Naive thymus-derived CD4-positive, alpha-beta T cell (primary cell): ENCODE measurements at regions of chr9 and their contacts with region 1.

Region 1: DNA sequence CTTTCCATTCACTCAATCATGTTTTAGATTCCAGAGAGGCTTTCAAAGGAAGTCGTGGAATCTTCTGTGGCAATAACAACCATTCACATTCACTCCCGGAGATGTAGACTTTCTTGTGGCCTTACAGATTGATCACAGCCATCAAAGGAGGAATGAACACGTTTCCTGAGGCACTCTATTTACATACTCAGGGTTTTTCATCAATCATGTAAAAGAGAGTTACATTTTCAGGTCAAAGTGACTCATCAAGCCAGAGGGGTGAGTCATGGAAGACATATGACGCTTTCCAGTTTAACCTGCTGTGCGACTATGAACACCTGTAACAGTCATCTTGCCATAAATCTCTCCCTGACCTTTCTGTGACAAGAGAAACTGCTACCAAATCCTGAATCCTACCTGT is 39.3 kb upstream of the RAD23B start:
- DNase-seq: peak in 2 of 9 donors; percentile 8 to 28
- ATAC-seq: no peak
- H3K4me3 ChIP-seq: no peak overlapping the region
- H3K4me3 Mint-ChIP-seq: no peak overlapping the region
- H3K27ac ChIP-seq: no peak overlapping the region
- H3K27ac Mint-ChIP-seq: peak overlapping the region in 2 of 9 donors; percentile 2 to 43
- H3K4me1 ChIP-seq: no peaks in the 10 kb centered on the region
- H3K4me1 Mint-ChIP-seq: peaks cover 5 to 20% (median 12%) of the 10 kb centered on the region in 7 donors
- H3K27me3 ChIP-seq: no peaks in the 10 kb centered on the region
- H3K27me3 Mint-ChIP-seq: peaks cover 0 to 1% (median 0%) of the 10 kb centered on the region in 5 donors

Region 2: DNA sequence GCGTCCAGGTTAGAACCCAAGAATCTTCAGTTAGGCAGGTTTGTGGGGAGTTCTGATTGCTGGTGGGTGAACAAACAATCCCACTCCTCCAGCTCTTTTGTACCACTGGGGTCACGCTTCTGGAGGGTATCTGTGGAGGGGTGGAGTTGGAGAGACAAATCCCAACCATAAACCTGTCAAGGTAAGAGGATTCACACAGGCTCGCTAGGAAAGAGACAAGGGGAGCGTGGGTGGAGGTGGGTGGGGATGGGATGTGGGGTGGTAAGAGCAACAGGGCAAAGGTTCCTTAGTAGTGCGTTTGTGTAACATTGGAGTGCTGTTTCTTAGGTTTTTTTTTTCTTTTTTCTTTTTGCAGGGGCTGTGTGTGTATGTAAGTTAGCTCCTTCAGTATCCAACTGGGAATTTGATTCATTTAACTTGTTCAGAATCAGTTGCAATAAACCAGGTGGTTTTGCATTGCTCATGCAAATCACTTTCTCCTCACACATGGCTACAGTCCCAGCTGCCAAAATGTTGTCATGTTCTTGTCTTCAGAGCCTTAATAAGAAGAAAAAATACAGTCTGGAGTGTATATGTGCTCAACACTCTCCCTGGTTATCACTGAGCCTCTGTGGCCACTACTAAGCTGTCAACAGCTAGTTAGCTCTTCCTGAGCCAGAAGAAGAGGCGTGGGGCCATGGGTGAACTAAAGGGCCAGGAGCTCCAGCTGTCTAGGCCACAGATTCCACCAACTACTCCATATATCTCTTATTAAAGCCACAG is 124.7 kb before region 1 on chr9:
- CTCF ChIA-PET with region 1: no interaction called
- POLR2A ChIA-PET with region 1: no interaction called
- intact Hi-C with region 1: no loop called
- DNase-seq: no peak
- ATAC-seq: no peak
- H3K4me3 ChIP-seq: no peak overlapping the region
- H3K4me3 Mint-ChIP-seq: no peak overlapping the region
- H3K27ac ChIP-seq: no peak overlapping the region
- H3K27ac Mint-ChIP-seq: no peak overlapping the region
- H3K4me1 ChIP-seq: no peaks in the 10 kb centered on the region
- H3K4me1 Mint-ChIP-seq: peaks cover 0 to 6% (median 0%) of the 10 kb centered on the region in 7 donors
- H3K27me3 ChIP-seq: no peaks in the 10 kb centered on the region
- H3K27me3 Mint-ChIP-seq: peaks cover 4 to 32% (median 13%) of the 10 kb centered on the region in 5 donors

Region 3: GRCh38 chr9:107323836-107324585 is 80.3 kb after region 1 on chr9:
- CTCF ChIA-PET with region 1: no interaction called
- POLR2A ChIA-PET with region 1: no interaction called
- intact Hi-C with region 1: loop called in 1 of 2 experiments (anchors 5 kb)
- DNase-seq: no peak
- ATAC-seq: no peak
- H3K4me3 ChIP-seq: no peak overlapping the region
- H3K4me3 Mint-ChIP-seq: no peak overlapping the region
- H3K27ac ChIP-seq: no peak overlapping the region
- H3K27ac Mint-ChIP-seq: peak overlapping the region in 2 of 9 donors; percentile 11 to 17
- H3K4me1 ChIP-seq: no peaks in the 10 kb centered on the region
- H3K4me1 Mint-ChIP-seq: peaks cover 4 to 22% (median 13%) of the 10 kb centered on the region in 7 donors
- H3K27me3 ChIP-seq: no peaks in the 10 kb centered on the region
- H3K27me3 Mint-ChIP-seq: no peaks in the 10 kb centered on the region

Region 4: DNA sequence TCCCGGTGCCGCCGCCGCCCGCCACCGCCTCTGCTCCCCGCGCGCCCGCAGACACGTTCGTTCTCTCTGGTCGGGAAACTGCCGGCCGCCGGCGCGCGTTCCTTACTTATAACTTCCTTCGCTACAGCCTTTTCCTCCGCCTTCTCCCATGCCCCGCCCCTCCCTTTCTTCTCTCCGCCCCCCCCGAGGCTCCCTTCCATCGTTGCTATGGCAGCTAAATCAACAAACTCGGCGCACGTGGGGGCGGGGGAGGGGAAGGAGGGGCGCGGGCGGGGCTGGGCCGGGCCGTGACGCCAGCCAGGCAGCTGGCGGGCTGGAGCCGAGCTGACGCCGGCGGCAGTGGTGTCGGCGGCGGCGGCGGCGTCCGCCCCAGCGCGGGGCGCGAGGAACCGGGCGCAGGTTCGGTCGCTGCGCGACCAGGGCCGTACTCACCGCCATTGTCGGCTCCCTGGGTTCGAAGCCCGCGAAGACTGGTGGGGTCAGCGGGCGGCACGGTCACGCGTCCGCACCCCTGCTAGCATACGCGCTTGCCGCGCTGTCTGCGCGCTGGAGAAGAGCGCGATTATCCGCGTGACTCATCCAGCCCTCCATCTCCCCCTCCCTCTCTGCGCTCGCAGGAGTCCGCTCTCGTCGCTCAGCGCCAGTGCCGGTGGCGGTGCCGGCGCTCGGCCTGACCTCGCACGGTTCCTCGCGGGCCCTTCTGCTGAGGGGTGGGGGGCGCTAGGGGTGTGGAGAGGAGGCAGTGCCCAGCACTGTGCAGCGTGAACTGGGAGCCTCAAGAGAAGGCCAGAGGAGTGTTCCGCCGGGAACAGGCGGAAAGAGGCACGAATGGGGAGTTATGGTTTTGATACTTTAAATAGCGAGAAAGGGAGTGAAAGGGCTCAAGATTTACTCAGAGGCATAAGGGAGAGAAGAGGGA is 246.2 kb after region 1 on chr9 and contains the start of gene KLF4:
- CTCF ChIA-PET with region 1: no interaction called
- POLR2A ChIA-PET with region 1: no interaction called
- intact Hi-C with region 1: no loop called
- DNase-seq: peak in 7 of 9 donors; percentile 7 to 72 (median 23)
- ATAC-seq: peak; percentile 77
- H3K4me3 ChIP-seq: no peak within 1 kb of the TSS
- H3K4me3 Mint-ChIP-seq: peak within 1 kb of the TSS; percentile 59 to 85 (median 73)
- H3K27ac ChIP-seq: no peak within 1 kb of the TSS
- H3K27ac Mint-ChIP-seq: peak within 1 kb of the TSS in 1 of 9 donors; percentile 80
- H3K4me1 ChIP-seq: peaks cover 0 to 5% of the 10 kb centered on the region in 2 donors
- H3K4me1 Mint-ChIP-seq: peaks cover 5 to 28% (median 15%) of the 10 kb centered on the region in 7 donors
- H3K27me3 ChIP-seq: peaks cover 0 to 3% of the 10 kb centered on the region in 2 donors
- H3K27me3 Mint-ChIP-seq: peaks cover 56 to 71% (median 60%) of the 10 kb centered on the region in 5 donors
- total RNA-seq, gene KLF4: 0.29 to 266 (median 1.0) TPM